Tibial artery (tissue), 4 donors: ENCODE measurements at regions of chr6 and their contacts with region 1.

Region 1: DNA sequence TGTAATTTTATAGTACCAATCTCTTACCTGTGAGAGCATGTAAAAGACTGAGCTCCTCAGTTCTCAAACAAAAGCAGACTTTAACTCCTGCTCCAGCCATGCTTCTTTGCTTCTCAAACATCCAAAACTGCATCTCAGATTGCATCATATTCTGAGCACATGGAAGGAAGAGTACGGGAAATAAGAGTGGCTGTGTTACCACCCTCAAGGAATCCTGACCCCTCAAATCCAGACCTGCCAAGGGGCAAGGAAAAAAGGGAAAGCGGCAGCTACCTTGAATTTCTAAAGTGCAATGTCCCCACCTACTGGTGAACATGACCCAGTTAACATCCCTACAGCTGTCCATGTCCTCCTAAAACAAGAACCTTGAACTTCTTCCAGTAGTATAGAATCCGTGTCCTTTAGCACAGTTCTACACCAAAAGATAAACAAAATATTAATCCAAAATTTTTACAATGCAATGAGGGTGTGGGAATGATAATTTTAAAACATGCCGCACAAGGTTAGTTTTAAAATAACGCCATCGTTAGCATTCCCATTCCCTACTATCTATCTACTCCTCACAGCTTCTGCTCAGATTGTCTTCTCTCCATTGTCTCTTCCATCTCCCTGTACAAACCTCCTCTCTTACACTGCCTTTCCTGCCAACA is 34.1 kb upstream of the HLA-DQB1 start:
- DNase-seq: no peak
- H3K4me3 ChIP-seq: no peak overlapping the region
- H3K27ac ChIP-seq: no peak overlapping the region
- H3K4me1 ChIP-seq: no peaks in the 10 kb centered on the region
- H3K27me3 ChIP-seq: peaks cover 0 to 10% of the 10 kb centered on the region in 2 donors
- CTCF ChIP-seq: peak; percentile 63 to 69

Region 2: DNA sequence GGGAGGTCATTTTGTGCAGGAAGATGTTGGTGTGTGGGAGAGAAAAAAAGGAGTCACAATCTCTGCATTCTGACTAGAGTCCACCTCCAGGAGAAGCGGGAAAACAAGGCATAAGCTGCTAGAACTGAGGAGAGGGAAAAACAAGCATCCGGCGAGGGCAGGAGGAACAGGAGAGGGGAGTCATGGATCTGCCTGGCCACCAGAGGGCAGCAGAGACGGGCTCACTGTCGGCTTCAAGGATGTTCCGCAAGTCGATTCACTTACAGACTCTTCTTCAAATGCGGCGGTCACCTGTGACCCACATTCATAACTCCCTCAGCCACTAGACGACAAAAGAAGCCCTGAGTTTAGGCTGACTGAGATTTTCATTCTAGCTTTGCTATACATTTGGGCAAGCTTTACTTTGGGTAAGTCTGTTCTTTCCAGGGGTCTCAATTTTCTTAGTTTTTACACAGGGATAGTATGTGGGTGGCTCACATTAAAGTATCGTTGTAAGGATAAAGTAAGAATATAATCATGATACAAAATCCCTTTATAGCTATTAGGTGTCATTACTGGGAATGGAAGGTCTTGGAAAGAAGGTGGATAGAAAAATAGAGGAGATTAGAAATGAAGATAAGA is 287.0 kb before region 1 on chr6:
- intact Hi-C with region 1: loop called (anchors 5 kb)
- DNase-seq: peak; percentile 71 to 74
- H3K4me3 ChIP-seq: no peak overlapping the region
- H3K27ac ChIP-seq: no peak overlapping the region
- H3K4me1 ChIP-seq: peaks cover 0 to 8% (median 3%) of the 10 kb centered on the region in 4 donors
- H3K27me3 ChIP-seq: peaks cover 0 to 58% of the 10 kb centered on the region in 2 donors
- CTCF ChIP-seq: peak; percentile 77 to 94

Region 3: DNA sequence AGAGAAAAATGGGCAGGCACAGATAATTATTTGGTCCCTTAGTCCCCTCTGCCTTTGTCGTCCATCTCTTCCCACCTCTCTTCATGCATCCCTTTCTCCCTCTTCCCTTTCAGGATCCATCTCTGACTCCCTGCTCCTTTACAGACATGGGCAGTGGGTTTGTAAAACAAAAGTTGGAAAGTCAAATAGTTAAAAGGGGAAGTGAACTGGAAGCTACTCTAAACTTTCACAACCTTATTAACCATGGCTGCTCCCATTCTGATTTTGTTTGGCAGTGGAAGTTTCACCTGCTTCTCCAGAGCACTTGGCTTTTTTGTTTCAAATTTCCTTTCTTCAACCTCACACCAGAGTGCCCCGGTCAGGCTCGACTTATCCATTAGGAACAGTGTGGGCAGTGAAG is 41.9 kb after region 1 on chr6:
- intact Hi-C with region 1: no loop called
- DNase-seq: no peak
- H3K4me3 ChIP-seq: no peak overlapping the region
- H3K27ac ChIP-seq: no peak overlapping the region
- H3K4me1 ChIP-seq: no peaks in the 10 kb centered on the region
- H3K27me3 ChIP-seq: no peaks in the 10 kb centered on the region
- CTCF ChIP-seq: no peak

Region 4: DNA sequence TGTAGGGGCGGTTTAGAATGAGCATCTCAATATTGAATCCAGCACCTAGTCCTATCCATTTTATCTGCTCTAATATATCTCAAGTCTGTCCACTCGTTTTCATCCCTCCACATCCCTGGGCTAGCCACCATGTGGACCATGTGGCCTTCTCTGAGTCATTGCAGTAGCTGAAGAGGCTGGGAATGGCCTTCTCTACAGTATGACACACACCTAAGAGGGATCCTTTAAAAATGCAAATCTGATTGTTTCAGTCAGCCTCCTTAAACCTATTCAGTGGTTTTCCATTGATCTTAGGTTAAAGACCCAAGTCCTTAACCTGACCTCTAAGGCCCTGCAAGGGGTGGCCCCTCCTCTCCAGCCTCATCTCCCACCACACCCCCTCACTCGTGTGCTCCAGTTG is 517.2 kb after region 1 on chr6:
- intact Hi-C with region 1: no loop called
- DNase-seq: peak in 1 of 2 donors; percentile 23
- H3K4me3 ChIP-seq: no peak overlapping the region
- H3K27ac ChIP-seq: no peak overlapping the region
- H3K4me1 ChIP-seq: peaks cover 0 to 15% (median 12%) of the 10 kb centered on the region in 4 donors
- H3K27me3 ChIP-seq: peaks cover 0 to 19% of the 10 kb centered on the region in 2 donors
- CTCF ChIP-seq: no peak

Region 5: GRCh38 chr6:33781114-33781975 is 1080.8 kb after region 1 on chr6:
- intact Hi-C with region 1: no loop called
- DNase-seq: no peak
- H3K4me3 ChIP-seq: no peak overlapping the region
- H3K27ac ChIP-seq: no peak overlapping the region
- H3K4me1 ChIP-seq: peaks cover 0 to 26% (median 17%) of the 10 kb centered on the region in 4 donors
- H3K27me3 ChIP-seq: no peaks in the 10 kb centered on the region
- CTCF ChIP-seq: no peak